Activated naive CD4-positive, alpha-beta T cell treated with anti-CD3 and anti-CD28 coated beads for 36 hours (primary cell): ENCODE measurements at regions of chr9 and their contacts with region 1.

Region 1: DNA sequence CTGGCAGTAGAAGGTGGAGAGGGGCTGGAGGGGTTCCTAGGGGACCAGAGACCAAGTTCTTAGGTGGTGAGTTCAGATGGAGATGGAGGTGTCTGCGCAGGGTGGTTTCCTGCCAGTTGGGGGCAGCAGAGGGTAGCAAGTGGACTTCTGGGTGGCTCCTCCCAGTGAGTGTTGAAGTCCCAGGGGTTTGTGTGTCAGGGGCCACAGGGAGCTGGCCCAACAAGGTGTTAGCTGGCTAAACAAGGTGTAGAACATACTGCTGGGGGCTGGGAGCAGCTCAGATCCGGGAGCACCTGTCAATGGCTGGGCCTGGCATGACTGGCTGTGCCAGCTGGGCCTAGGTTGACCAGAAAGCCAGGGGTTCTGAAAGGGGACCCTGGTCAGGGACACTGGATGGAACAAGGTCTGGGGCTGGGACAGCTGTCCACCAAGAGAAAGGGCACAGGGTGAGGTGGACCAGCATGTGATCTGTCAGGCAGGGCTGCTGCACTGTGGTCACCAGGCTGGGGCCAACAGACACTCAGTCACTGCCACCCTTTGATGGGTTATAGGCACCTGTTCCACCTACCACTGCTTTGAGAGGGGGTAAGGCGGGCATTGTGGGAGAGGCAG is 35.6 kb downstream of the DAB2IP start:
- DNase-seq: peak; percentile 82
- H3K4me3 Mint-ChIP-seq: no peak overlapping the region
- H3K27ac Mint-ChIP-seq: no peak overlapping the region
- H3K4me1 Mint-ChIP-seq: no peaks in the 10 kb centered on the region
- H3K27me3 Mint-ChIP-seq: no peaks in the 10 kb centered on the region

Region 2: GRCh38 chr9:120531683-120532300 is 1155.2 kb before region 1 on chr9:
- CTCF ChIA-PET with region 1: no interaction called
- intact Hi-C with region 1: no loop called
- DNase-seq: no peak
- H3K4me3 Mint-ChIP-seq: no peak overlapping the region
- H3K27ac Mint-ChIP-seq: no peak overlapping the region
- H3K4me1 Mint-ChIP-seq: no peaks in the 10 kb centered on the region
- H3K27me3 Mint-ChIP-seq: no peaks in the 10 kb centered on the region

Region 3: GRCh38 chr9:121201738-121202533 is 485.1 kb before region 1 on chr9 and contains the start of gene RAB14:
- CTCF ChIA-PET with region 1: no interaction called
- intact Hi-C with region 1: no loop called
- DNase-seq: peak; percentile 100
- H3K4me3 Mint-ChIP-seq: peak within 1 kb of the TSS; percentile 91
- H3K27ac Mint-ChIP-seq: peak within 1 kb of the TSS; percentile 95
- H3K4me1 Mint-ChIP-seq: peaks cover 42% of the 10 kb centered on the region
- H3K27me3 Mint-ChIP-seq: no peaks in the 10 kb centered on the region
- total RNA-seq, gene RAB14: 61.1 to 64.2 TPM

Region 4: GRCh38 chr9:121545875-121546423 is 141.1 kb before region 1 on chr9:
- CTCF ChIA-PET with region 1: interaction called, 11 read pairs
- intact Hi-C with region 1: loop called (anchors 2 kb)
- DNase-seq: peak; percentile 80
- H3K4me3 Mint-ChIP-seq: no peak overlapping the region
- H3K27ac Mint-ChIP-seq: no peak overlapping the region
- H3K4me1 Mint-ChIP-seq: peaks cover under 1% of the 10 kb centered on the region
- H3K27me3 Mint-ChIP-seq: peaks cover 27% of the 10 kb centered on the region

Region 5: GRCh38 chr9:121640076-121640475 is 47.0 kb before region 1 on chr9:
- CTCF ChIA-PET with region 1: no interaction called
- intact Hi-C with region 1: loop called (anchors 2 kb)
- DNase-seq: peak; percentile 53
- H3K4me3 Mint-ChIP-seq: no peak overlapping the region
- H3K27ac Mint-ChIP-seq: no peak overlapping the region
- H3K4me1 Mint-ChIP-seq: no peaks in the 10 kb centered on the region
- H3K27me3 Mint-ChIP-seq: no peaks in the 10 kb centered on the region

Region 6: GRCh38 chr9:121674952-121675351 is 12.1 kb before region 1 on chr9:
- CTCF ChIA-PET with region 1: no interaction called
- intact Hi-C with region 1: no loop called
- DNase-seq: no peak
- H3K4me3 Mint-ChIP-seq: no peak overlapping the region
- H3K27ac Mint-ChIP-seq: no peak overlapping the region
- H3K4me1 Mint-ChIP-seq: no peaks in the 10 kb centered on the region
- H3K27me3 Mint-ChIP-seq: peaks cover 6% of the 10 kb centered on the region